IMR-90 (cell line): ENCODE measurements at regions of chr13 and their contacts with region 1.

Region 1: DNA sequence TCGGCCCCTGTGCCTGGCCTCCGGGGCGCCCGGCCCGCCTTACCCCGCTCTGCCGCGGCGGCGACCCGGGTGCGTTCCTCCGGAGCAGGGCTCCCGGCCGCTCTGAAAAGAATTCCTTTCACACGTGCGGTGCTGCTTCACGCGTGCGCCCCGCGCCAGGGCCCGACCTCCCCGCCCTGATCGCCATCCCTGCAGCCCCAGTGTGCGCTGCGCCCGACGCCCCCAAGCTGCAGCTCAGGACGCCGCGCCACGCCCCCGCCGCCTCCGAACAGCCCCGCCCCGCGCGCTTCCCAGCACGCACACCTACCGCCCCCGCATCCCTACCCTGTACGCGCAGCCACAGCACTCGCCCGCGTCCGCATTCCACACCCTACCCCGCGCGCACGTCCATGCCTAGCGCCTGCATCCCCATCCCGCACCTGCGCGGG is at the start of gene GJA3:
- DNase-seq: peak; percentile 37
- ATAC-seq: peak; percentile 53
- H3K4me3 ChIP-seq: peak within 1 kb of the TSS; percentile 68
- H3K27ac ChIP-seq: peak within 1 kb of the TSS; percentile 46
- H3K4me1 ChIP-seq: peaks cover 2% of the 10 kb centered on the region
- H3K27me3 ChIP-seq: no peaks in the 10 kb centered on the region
- CTCF ChIP-seq: no peak
- POLR2A ChIP-seq: no peak
- RAD21 ChIP-seq: no peak
- total RNA-seq, gene GJA3: 2.7 and 3.6 TPM in 2 replicates

Region 2: DNA sequence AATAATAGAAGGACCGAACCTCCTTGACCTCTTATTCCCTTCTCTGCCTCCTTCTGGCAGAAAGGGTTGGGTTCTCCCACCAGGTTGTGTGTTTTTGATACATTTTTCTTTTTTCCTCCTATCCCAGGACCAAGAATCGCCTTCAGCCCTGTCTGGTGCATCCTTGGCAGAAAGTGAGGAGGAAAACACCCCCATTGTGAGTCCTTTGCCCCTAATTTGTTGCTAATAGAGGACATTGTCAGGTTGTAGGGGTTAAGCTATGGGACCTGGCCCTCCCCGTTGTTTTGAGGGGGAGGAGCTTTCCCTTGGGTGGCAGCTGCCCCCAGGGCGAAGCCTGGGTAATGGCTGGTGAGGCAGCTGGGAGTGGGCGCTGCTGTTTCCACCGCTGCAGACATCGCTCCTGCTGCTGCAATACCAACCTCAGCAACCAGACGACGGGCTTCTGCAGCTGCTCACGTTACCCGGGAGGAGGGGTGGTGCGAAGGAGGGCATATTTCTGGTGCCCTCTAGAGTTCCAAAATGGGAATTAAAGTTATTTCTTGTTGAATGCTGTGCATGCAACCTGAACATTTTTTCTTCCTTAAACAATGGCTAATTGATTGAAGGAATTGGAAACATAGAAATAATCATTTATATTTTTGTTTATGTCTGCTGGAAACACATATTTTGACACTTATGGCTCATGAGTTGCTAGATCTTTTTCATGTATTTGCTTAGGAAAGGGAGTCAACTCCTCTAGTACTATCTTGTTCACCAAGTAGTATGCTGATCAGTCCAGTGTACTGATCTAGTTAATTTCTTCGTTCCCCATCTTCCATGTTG is 200.8 kb before region 1 on chr13:
- CTCF ChIA-PET with region 1: no interaction called
- POLR2A ChIA-PET with region 1: no interaction called
- dilution Hi-C with region 1: no loop called
- in situ Hi-C with region 1: no loop called
- intact Hi-C with region 1: loop called (anchors 2 kb)
- DNase-seq: peak; percentile 90
- ATAC-seq: peak; percentile 36
- H3K4me3 ChIP-seq: peak overlapping the region; percentile 96
- H3K27ac ChIP-seq: peak overlapping the region; percentile 97
- H3K4me1 ChIP-seq: peaks cover 2% of the 10 kb centered on the region; the same call in 1 of the 2 replicates
- H3K27me3 ChIP-seq: no peaks in the 10 kb centered on the region
- CTCF ChIP-seq: peak; percentile 97
- POLR2A ChIP-seq: no peak
- RAD21 ChIP-seq: peak; percentile 72

Region 3: GRCh38 chr13:19993024-19993423 is 167.8 kb before region 1 on chr13:
- CTCF ChIA-PET with region 1: no interaction called
- POLR2A ChIA-PET with region 1: no interaction called
- dilution Hi-C with region 1: no loop called
- in situ Hi-C with region 1: loop called (anchors 10 kb)
- intact Hi-C with region 1: no loop called
- DNase-seq: no peak
- ATAC-seq: no peak
- H3K4me3 ChIP-seq: no peak overlapping the region
- H3K27ac ChIP-seq: no peak overlapping the region
- H3K4me1 ChIP-seq: no peaks in the 10 kb centered on the region
- H3K27me3 ChIP-seq: no peaks in the 10 kb centered on the region
- CTCF ChIP-seq: no peak
- POLR2A ChIP-seq: no peak
- RAD21 ChIP-seq: no peak

Region 4: GRCh38 chr13:20090349-20090748 is 70.5 kb before region 1 on chr13:
- CTCF ChIA-PET with region 1: no interaction called
- POLR2A ChIA-PET with region 1: no interaction called
- dilution Hi-C with region 1: no loop called
- in situ Hi-C with region 1: no loop called
- intact Hi-C with region 1: loop called (anchors 1 kb)
- DNase-seq: no peak
- ATAC-seq: peak; percentile 17; the same call in 1 of the 2 replicates
- H3K4me3 ChIP-seq: no peak overlapping the region
- H3K27ac ChIP-seq: no peak overlapping the region
- H3K4me1 ChIP-seq: no peaks in the 10 kb centered on the region
- H3K27me3 ChIP-seq: no peaks in the 10 kb centered on the region
- CTCF ChIP-seq: peak; percentile 24; the same call in 1 of the 2 replicates
- POLR2A ChIP-seq: no peak
- RAD21 ChIP-seq: peak; percentile 22; the same call in 1 of the 2 replicates

Region 5: GRCh38 chr13:20219577-20219976 is 58.7 kb after region 1 on chr13:
- CTCF ChIA-PET with region 1: no interaction called
- POLR2A ChIA-PET with region 1: no interaction called
- dilution Hi-C with region 1: no loop called
- in situ Hi-C with region 1: no loop called
- intact Hi-C with region 1: no loop called
- DNase-seq: no peak
- ATAC-seq: no peak
- H3K4me3 ChIP-seq: no peak overlapping the region
- H3K27ac ChIP-seq: no peak overlapping the region
- H3K4me1 ChIP-seq: no peaks in the 10 kb centered on the region
- H3K27me3 ChIP-seq: peaks cover 33% of the 10 kb centered on the region
- CTCF ChIP-seq: no peak
- POLR2A ChIP-seq: no peak
- RAD21 ChIP-seq: no peak

Region 6: DNA sequence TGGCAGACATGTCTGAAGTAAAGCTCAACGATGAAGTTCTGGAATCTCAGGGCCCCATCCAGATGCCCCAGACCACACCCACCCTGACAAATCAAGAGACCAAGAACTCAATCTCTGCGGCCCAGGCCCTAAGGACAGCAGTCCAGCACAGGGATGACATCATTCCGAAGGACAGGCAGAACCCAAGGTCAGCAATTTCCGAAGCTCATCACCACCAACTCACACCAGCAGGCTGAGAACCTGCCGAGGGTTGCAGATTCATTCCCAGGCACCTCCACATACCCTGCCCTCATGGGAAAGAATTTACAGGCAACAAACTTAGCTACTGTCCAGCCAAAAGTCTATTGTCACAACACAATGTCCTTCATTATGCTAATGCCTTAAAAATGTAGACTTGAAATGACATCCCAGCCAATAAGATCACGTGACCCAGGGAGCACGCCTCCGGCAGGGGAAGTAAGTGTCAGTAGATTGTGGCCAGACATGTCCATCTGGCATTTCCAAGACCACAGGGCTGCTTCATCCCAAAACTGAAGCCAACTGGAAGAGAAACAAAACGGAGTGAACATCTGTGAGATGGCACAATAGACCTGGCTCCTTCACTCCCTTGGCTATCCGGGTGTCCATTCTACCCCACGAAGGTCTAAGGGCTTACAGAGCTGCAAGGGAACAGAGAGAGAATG is 266.0 kb after region 1 on chr13:
- CTCF ChIA-PET with region 1: interaction called, 13 read pairs
- POLR2A ChIA-PET with region 1: no interaction called
- dilution Hi-C with region 1: no loop called
- in situ Hi-C with region 1: no loop called
- intact Hi-C with region 1: no loop called
- DNase-seq: peak; percentile 32
- ATAC-seq: no peak
- H3K4me3 ChIP-seq: no peak overlapping the region
- H3K27ac ChIP-seq: no peak overlapping the region
- H3K4me1 ChIP-seq: no peaks in the 10 kb centered on the region
- H3K27me3 ChIP-seq: peaks cover 9% of the 10 kb centered on the region
- CTCF ChIP-seq: no peak
- POLR2A ChIP-seq: no peak
- RAD21 ChIP-seq: no peak